ENCODE measurements at regions of chr12 and their contacts with region 1.

Region 1: GRCh38 chr12:14167005-14167628 is 185.7 kb upstream of the GRIN2B start:
- DNase-seq: peak; percentile 50
- ATAC-seq: no peak
- H3K4me3 Mint-ChIP-seq: no peak overlapping the region
- H3K27ac Mint-ChIP-seq: no peak overlapping the region
- H3K4me1 Mint-ChIP-seq: no peaks in the 10 kb centered on the region
- H3K27me3 Mint-ChIP-seq: peaks cover 10% of the 10 kb centered on the region

Region 2: GRCh38 chr12:13362260-13362841 is 804.8 kb before region 1 on chr12:
- CTCF ChIA-PET with region 1: interaction called, 4 read pairs
- POLR2A ChIA-PET with region 1: no interaction called
- intact Hi-C with region 1: loop called in 1 of 2 experiments (anchors 5 kb)
- DNase-seq: peak; percentile 68
- ATAC-seq: peak; percentile 78
- H3K4me3 Mint-ChIP-seq: no peak overlapping the region
- H3K27ac Mint-ChIP-seq: no peak overlapping the region
- H3K4me1 Mint-ChIP-seq: no peaks in the 10 kb centered on the region
- H3K27me3 Mint-ChIP-seq: peaks cover 24% of the 10 kb centered on the region

Region 3: GRCh38 chr12:13734584-13735152 is 432.4 kb before region 1 on chr12:
- CTCF ChIA-PET with region 1: no interaction called
- POLR2A ChIA-PET with region 1: no interaction called
- intact Hi-C with region 1: loop called in 1 of 2 experiments (anchors 5 kb)
- DNase-seq: no peak
- ATAC-seq: no peak
- H3K4me3 Mint-ChIP-seq: no peak overlapping the region
- H3K27ac Mint-ChIP-seq: no peak overlapping the region
- H3K4me1 Mint-ChIP-seq: no peaks in the 10 kb centered on the region
- H3K27me3 Mint-ChIP-seq: peaks cover 5% of the 10 kb centered on the region

Region 4: DNA sequence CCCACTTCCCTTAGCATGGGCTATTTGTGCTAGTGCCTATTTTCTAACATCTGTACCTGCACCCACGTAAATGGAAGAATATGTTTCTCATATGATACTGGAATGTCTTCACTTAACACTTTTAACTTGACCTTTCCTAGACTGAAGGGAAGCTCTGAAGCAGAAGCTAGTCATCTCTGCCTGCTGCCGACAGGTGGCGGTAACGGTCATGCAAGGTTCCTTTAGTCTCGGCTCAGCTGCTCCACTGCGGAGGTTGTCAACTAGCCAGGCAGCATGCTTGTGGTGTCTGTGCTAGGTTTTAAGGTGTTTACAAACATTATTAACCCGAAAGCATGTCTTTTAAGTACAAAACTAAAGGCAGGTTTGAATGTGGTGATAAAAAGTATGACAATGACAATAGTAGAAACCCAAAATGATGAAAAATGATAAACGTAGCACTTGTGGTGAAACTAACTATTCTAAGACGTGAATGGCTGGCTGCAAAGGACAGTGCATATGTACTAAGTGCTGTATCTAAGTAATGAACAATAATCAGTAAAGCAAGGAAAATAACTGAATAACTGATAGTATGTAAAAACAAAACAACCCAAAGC is 302.9 kb before region 1 on chr12:
- CTCF ChIA-PET with region 1: interaction called, 9 read pairs
- POLR2A ChIA-PET with region 1: no interaction called
- intact Hi-C with region 1: loop called (anchors 1 kb)
- DNase-seq: peak; percentile 82
- ATAC-seq: peak; percentile 78
- H3K4me3 Mint-ChIP-seq: no peak overlapping the region
- H3K27ac Mint-ChIP-seq: no peak overlapping the region
- H3K4me1 Mint-ChIP-seq: no peaks in the 10 kb centered on the region
- H3K27me3 Mint-ChIP-seq: peaks cover 18% of the 10 kb centered on the region

Region 5: DNA sequence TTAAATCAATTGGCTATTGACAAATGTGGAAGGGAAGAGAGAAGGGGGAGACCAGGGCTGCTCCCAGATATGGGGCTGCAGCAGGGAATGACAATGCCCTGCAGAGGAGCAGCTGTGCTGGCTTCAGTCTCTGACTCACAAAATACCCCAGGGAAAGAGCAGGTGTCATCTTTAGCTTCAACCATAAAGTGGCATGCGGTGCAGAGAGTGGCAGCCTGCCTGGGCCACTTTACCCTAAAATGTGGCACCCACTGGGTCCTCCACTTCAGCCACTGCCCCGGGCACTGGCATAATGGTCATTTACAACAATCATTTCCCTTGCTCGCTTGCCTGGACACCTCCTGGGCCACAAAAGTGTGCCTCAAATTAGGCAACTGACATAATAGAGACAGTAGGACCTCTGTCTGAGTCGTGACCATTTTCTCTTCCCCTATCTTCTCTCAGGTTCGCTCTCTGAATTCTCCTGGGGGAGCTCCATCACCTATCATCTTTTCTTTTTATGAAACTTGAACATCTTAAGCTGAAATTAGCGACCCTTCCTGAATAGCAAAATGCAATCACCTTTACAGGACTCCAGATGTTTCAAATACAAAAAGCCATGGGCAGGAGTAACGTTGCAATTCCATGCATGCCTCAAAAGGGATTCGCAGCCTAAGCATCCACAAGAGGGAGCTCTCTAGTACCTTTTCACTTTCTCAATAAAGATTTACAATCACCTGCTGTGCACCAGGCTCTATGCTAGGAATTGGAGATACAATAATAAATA is 18.5 kb after region 1 on chr12:
- CTCF ChIA-PET with region 1: interaction called, 10 read pairs
- POLR2A ChIA-PET with region 1: no interaction called
- intact Hi-C with region 1: no loop called
- DNase-seq: peak; percentile 38
- ATAC-seq: no peak
- H3K4me3 Mint-ChIP-seq: no peak overlapping the region
- H3K27ac Mint-ChIP-seq: no peak overlapping the region
- H3K4me1 Mint-ChIP-seq: no peaks in the 10 kb centered on the region
- H3K27me3 Mint-ChIP-seq: peaks cover 6% of the 10 kb centered on the region

Measured in activated CD4-positive, alpha-beta T cell treated with anti-CD3 and anti-CD28 coated beads for 36 hours (primary cell).